Lower leg skin (tissue), 4 donors: ENCODE measurements at regions of chrX and their contacts with region 1.

Region 1: GRCh38 chrX:122817321-122817955 is 366.6 kb upstream of the GRIA3 start:
- DNase-seq: no peak
- H3K4me3 ChIP-seq: no peak overlapping the region
- CTCF ChIP-seq: no peak
- POLR2A ChIP-seq: no peak

Region 2: DNA sequence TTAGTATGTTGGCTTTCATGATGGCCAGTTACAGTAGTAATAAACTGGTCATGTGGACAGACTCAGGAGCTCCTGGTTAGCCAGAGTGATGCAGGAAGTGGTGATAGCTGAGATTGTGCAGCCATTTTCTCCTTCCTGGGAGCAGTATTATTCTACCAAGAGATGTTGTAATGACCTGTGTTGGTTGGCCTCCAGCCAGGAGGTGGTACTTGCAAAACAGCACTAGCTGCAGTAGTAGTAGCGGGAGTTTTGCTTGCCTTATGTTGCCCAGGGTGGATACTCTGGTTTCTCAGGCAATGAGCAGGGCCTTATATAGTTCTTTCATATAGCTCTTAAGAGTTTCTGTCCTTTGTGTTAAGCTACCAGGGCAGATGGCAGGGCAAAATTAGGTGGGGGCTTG is 771.2 kb before region 1 on chrX:
- intact Hi-C with region 1: loop called (anchors 5 kb)
- DNase-seq: no peak
- H3K4me3 ChIP-seq: no peak overlapping the region
- CTCF ChIP-seq: no peak
- POLR2A ChIP-seq: no peak

Region 3: DNA sequence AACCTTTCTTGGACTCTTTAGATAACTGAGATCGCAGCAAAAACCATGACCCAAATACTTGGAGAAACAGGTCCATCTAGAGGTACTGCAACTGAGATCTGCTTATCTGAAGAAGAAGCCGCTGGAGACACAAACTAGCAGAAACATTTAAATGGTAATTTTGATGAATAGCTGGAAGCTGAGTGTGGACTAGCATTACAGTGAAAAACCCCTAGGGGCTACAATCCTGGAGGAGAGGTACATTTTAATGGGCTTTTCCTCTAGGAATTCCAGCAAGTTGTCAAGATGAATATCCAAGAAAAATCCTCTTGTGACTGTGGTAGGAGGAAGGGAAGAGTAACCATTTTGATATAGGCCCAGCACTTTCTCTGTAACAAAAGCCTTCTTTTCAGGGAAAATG is 225.9 kb before region 1 on chrX:
- intact Hi-C with region 1: no loop called
- DNase-seq: no peak
- H3K4me3 ChIP-seq: no peak overlapping the region
- CTCF ChIP-seq: no peak
- POLR2A ChIP-seq: no peak

Region 4: DNA sequence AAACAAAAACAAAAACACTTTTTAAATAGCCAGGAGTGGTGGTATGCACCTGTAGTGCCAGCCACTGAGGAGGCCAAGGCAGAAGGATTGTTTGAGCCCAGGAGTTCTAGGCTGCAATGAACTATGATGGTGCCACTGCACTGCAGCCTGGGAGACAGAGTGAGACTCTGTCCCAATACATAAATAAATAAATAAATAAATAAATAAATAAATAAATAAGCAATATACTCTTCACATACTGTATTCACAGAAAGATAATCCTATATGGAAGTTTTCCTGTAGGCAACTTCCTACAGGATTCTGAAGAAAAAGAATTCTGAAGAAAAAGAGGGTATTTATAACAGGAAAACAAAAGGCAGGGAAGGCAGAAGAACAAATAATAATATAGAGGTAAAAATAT is 73.3 kb after region 1 on chrX:
- intact Hi-C with region 1: loop called (anchors 2 kb)
- DNase-seq: no peak
- H3K4me3 ChIP-seq: no peak overlapping the region
- CTCF ChIP-seq: no peak
- POLR2A ChIP-seq: no peak

Region 5: DNA sequence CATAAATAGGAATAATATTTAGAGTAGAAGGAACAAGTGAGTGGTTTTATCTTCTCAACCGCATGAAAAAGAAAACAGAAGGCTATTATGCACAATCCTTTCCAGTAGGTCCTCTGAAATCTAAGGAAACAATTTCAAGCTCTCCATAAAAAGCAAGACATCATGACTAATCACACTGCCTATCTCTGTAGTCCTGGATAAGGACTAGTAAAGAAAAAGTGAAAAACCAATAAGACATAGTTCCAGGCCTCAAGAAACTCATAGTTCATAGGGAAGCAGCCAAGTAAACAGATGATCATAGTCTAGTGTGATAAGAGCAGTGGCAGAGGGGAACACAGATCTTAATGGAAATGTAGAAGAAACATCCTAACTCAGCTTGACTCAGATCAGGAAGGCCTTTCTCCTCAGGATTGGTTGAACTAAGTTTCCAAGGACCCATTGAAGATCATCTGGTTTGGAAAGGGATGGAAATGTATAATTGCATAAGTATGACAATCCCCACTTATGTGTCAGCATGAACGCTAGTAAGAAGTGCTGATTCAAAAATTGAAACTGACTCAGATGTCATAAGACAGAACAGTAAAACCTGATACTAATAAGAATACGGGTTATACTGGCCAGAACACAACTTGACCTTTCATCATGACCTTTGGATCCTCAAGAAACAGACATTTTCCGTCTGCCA is 521.9 kb after region 1 on chrX:
- intact Hi-C with region 1: no loop called
- DNase-seq: no peak
- H3K4me3 ChIP-seq: no peak overlapping the region
- CTCF ChIP-seq: no peak
- POLR2A ChIP-seq: no peak